Natural killer cell (primary cell): ENCODE measurements at regions of chr10 and their contacts with region 1.

Region 1: DNA sequence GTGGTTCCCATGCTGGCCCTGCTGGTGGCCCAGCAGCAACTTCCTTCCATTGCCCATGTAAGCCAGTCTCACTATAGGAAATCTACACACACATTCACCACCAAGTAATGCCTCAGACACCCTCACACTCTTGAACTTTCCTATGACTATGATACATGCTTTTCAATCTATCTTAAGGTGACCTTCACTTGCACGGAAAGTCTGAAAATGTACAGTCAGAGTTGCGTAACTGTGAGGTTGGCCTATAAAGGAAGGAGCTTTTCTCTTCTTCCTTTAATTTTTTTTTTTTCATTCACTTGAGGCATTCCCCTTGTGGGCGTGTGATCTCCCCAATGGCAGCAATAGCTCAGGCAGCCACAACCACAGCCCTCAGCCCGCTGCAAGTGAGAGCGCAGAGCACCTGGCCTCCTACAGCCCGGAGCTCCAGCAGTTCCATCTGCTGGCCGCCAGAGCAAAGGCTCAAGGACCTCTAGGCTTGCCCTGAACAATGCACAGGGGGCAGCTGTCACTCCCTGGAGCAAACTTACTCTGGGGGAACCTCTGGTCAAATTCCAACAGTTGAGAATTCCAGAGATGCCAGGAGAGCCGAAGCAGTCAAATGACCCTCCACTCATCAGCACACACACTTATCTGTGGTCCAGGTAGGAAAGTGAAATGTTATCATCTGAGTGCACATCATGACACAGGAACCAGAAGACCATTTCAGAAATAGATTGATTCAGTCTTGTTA is 123.1 kb upstream of the ADO start:
- DNase-seq: peak; percentile 70 to 91
- ATAC-seq: peak; percentile 84 to 90 (median 90)
- H3K4me3 ChIP-seq: no peak overlapping the region
- H3K4me3 Mint-ChIP-seq: peak overlapping the region; percentile 13
- H3K27ac ChIP-seq: peak overlapping the region; percentile 15
- H3K27ac Mint-ChIP-seq: peak overlapping the region; percentile 61 to 85
- H3K4me1 ChIP-seq: peaks cover 18% of the 10 kb centered on the region
- H3K4me1 Mint-ChIP-seq: peaks cover 34 to 55% of the 10 kb centered on the region in 2 donors
- H3K27me3 ChIP-seq: no peaks in the 10 kb centered on the region
- H3K27me3 Mint-ChIP-seq: no peaks in the 10 kb centered on the region
- CTCF ChIP-seq: peak; percentile 36

Region 2: GRCh38 chr10:62610649-62611229 is 70.6 kb before region 1 on chr10:
- intact Hi-C with region 1: loop called (anchors 5 kb)
- DNase-seq: peak; percentile 56 to 86
- ATAC-seq: peak; percentile 85 to 96 (median 88)
- H3K4me3 ChIP-seq: no peak overlapping the region
- H3K4me3 Mint-ChIP-seq: no peak overlapping the region
- H3K27ac ChIP-seq: no peak overlapping the region
- H3K27ac Mint-ChIP-seq: no peak overlapping the region
- H3K4me1 ChIP-seq: peaks cover 11% of the 10 kb centered on the region
- H3K4me1 Mint-ChIP-seq: peaks cover 20 to 23% of the 10 kb centered on the region in 2 donors
- H3K27me3 ChIP-seq: no peaks in the 10 kb centered on the region
- H3K27me3 Mint-ChIP-seq: no peaks in the 10 kb centered on the region
- CTCF ChIP-seq: peak; percentile 96

Region 3: GRCh38 chr10:62637249-62638061 is 43.9 kb before region 1 on chr10:
- intact Hi-C with region 1: loop called (anchors 1 kb)
- DNase-seq: peak; percentile 57 to 87
- ATAC-seq: peak; percentile 71 to 89 (median 79)
- H3K4me3 ChIP-seq: peak overlapping the region; percentile 24
- H3K4me3 Mint-ChIP-seq: no peak overlapping the region
- H3K27ac ChIP-seq: peak overlapping the region; percentile 94
- H3K27ac Mint-ChIP-seq: no peak overlapping the region
- H3K4me1 ChIP-seq: peaks cover 56% of the 10 kb centered on the region
- H3K4me1 Mint-ChIP-seq: peaks cover 11 to 12% of the 10 kb centered on the region in 2 donors
- H3K27me3 ChIP-seq: no peaks in the 10 kb centered on the region
- H3K27me3 Mint-ChIP-seq: no peaks in the 10 kb centered on the region
- CTCF ChIP-seq: no peak

Region 4: DNA sequence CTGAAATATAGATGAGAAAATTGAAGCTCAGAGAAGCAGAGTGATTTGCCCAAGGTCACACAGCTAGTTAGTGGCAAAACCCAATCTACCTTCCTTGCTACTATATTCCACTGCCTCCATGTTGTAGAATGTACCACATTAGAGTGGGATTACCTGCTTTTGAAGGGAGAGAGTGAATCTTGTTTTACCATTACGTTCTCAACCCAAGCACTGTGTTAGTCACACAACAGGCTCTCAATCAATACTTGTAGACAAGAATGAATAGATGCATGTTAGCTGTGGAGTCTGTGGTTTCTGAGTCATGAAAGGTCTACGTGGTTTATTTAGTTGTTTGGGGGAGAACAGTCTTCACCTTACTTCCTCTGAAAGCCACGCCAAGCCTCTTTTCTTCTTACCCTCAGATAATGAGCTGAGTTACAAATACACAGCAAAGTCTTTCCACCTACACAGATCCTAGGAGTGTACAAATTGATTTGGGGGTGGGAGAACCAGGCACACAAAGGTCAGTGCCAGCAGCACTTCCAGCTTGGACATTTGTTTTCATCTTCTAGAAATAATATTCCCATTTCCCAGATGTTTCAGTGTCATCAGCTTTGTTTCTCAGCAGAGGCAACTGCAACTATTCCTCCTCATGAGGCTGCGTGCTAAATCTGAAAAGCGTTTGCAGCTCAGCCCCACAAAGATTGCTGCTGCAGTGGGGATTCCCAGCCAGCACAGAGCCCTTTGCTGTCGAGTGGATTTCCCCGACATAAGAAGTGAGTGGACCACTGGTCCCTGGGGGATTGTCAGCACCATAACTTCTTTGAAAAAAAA is 51.7 kb after region 1 on chr10:
- intact Hi-C with region 1: loop called (anchors 1 kb)
- DNase-seq: peak; percentile 33 to 88
- ATAC-seq: peak; percentile 73 to 80 (median 79)
- H3K4me3 ChIP-seq: no peak overlapping the region
- H3K4me3 Mint-ChIP-seq: peak overlapping the region; percentile 28
- H3K27ac ChIP-seq: peak overlapping the region; percentile 50
- H3K27ac Mint-ChIP-seq: peak overlapping the region in 1 of 2 donors; percentile 78
- H3K4me1 ChIP-seq: peaks cover 33% of the 10 kb centered on the region
- H3K4me1 Mint-ChIP-seq: peaks cover 14% of the 10 kb centered on the region in 2 donors
- H3K27me3 ChIP-seq: no peaks in the 10 kb centered on the region
- H3K27me3 Mint-ChIP-seq: no peaks in the 10 kb centered on the region
- CTCF ChIP-seq: no peak

Region 5: GRCh38 chr10:62851442-62851841 is 170.1 kb after region 1 on chr10:
- intact Hi-C with region 1: loop called (anchors 2 kb)
- DNase-seq: peak in 1 of 2 donors; percentile 41
- ATAC-seq: no peak
- H3K4me3 ChIP-seq: no peak overlapping the region
- H3K4me3 Mint-ChIP-seq: no peak overlapping the region
- H3K27ac ChIP-seq: no peak overlapping the region
- H3K27ac Mint-ChIP-seq: peak overlapping the region in 1 of 2 donors; percentile 35
- H3K4me1 ChIP-seq: peaks cover 32% of the 10 kb centered on the region
- H3K4me1 Mint-ChIP-seq: peaks cover 55 to 56% of the 10 kb centered on the region in 2 donors
- H3K27me3 ChIP-seq: no peaks in the 10 kb centered on the region
- H3K27me3 Mint-ChIP-seq: no peaks in the 10 kb centered on the region
- CTCF ChIP-seq: peak; percentile 37